ENCODE measurements at regions of chr9 and their contacts with region 1.

Region 1: GRCh38 chr9:126490871-126491567 is 122.7 kb upstream of the LMX1B start:
- DNase-seq: no peak
- H3K4me3 ChIP-seq: no peak overlapping the region
- CTCF ChIP-seq: peak; percentile 82

Region 2: DNA sequence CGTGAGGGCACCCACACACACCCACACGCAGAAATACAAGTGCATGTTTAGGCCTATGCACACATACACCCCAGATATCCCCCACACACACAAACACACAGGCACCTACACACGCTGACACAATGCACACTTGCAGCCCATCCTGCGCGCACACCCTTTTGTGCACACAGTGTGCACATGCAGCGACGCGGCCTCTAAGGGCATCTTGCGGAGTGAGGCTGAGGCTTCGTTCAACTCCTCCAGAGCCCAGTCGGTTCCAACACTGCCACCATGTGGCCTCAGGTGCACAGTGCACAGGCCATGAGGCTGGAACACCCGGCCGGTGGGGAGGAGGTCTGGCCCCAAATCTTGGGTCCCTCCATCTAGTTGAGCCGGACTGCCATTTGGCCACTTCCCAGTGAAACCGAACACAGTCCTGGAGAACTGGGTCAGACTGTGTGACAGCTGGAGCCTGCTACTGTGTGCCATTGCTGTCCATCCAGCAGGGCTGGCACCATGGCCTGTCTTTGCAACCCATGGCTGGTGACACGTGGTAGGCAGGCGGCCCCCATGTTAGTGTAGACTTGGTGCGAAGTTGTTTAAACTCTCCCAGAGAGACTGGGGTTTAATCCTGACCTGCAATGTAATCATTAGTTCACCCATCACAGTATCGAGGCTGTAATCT is 262.1 kb before region 1 on chr9:
- CTCF ChIA-PET with region 1: interaction called, 15 read pairs
- POLR2A ChIA-PET with region 1: no interaction called
- DNase-seq: no peak
- H3K4me3 ChIP-seq: no peak overlapping the region
- CTCF ChIP-seq: peak; percentile 96

Region 3: DNA sequence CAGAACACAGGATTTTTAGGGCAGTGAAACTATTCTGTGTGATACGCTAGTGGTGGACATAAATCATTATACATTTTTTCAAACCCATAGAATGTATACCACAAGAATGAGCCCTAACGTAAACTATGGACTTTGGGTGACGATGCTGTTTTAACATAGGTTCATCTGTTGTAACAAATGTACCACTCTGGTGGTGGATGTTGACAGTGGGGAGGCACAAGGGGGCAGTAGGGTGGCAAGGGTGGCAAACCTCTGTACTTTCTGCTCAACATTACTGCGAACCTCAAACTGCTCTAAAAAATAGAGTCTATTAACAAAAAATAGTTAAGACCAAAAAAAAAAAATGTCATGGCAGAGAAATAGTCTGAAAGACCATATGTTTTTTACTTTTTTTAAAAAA is 173.5 kb before region 1 on chr9:
- CTCF ChIA-PET with region 1: interaction called, 54 read pairs
- POLR2A ChIA-PET with region 1: no interaction called
- DNase-seq: no peak
- H3K4me3 ChIP-seq: no peak overlapping the region
- CTCF ChIP-seq: peak; percentile 48

Region 4: GRCh38 chr9:126420643-126421577 is 70.1 kb before region 1 on chr9:
- CTCF ChIA-PET with region 1: interaction called, 10 read pairs
- POLR2A ChIA-PET with region 1: no interaction called
- DNase-seq: no peak
- H3K4me3 ChIP-seq: no peak overlapping the region
- CTCF ChIP-seq: no peak

Region 5: GRCh38 chr9:126471084-126471624 is 19.9 kb before region 1 on chr9:
- CTCF ChIA-PET with region 1: interaction called, 28 read pairs
- POLR2A ChIA-PET with region 1: no interaction called
- DNase-seq: peak; percentile 53
- H3K4me3 ChIP-seq: peak overlapping the region; percentile 19
- CTCF ChIP-seq: no peak

Region 6: DNA sequence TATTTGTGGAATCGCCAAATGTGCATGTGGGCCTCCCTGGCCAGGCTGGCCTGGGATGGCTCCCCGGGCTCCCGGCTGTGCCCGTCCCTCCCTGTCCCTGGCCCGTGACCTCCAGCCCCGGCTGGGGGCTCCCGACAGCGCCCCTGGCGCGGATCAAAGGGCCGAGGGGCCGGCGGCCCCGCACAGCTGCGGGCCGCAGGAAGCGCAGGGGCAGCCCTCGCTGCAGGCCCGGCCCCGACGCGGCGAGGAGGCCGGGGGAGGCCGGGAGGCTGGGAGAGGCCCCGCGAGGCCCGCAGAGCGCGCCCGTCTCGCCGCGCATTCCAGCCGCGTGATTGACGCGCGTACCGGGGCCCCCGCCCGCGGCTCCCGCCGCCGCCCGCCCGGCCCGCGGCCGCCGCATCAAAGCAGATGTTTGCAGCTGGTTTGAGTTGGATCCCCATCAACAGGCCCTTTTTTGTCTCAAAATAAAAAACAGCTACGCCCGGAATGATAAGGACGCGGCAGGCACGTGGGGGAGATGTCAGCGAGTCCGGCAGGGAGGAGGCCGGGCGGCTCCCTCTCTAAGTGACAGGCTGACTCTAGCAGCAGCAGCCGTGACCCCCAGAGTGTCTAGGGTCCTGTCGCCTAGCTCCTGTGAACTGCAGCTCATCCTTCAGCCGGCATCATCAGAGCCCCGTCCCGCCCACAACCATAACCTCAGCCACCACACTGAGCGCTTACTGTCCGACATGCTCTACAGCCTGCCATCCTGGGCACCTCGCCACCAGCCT is 192.1 kb after region 1 on chr9:
- CTCF ChIA-PET with region 1: no interaction called
- POLR2A ChIA-PET with region 1: no interaction called
- DNase-seq: no peak
- H3K4me3 ChIP-seq: no peak overlapping the region
- CTCF ChIP-seq: no peak

Region 7: GRCh38 chr9:126989847-126990842 is 499.1 kb after region 1 on chr9:
- CTCF ChIA-PET with region 1: no interaction called
- POLR2A ChIA-PET with region 1: no interaction called
- DNase-seq: no peak
- H3K4me3 ChIP-seq: no peak overlapping the region
- CTCF ChIP-seq: no peak

Measured in AG04449 (cell line).